Right ventricle myocardium inferior (tissue), 1 donor: ENCODE measurements at regions of chr5 and their contacts with region 1.

Region 1: DNA sequence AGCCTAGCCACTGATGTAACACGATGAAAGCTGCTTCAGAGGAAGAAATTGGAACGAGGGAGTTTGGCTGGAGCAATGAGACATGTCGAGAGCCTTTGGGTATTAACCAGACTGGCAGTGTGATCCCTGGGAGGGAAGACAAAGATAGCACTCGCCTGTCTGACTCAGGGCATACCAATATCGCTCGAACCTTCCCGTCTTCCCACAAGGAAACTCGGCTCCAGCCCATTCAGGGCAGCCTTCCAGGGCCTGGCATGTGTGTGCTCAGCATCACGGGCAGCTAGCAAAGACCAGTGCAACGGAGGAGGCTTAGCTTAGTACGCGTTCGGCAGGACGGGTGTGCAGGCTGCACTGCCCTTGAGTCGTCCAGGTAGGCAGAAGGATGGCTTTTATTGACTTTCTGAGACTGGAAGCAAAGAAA is 356.9 kb upstream of the WWC1 start:
- DNase-seq: peak; percentile 79
- ATAC-seq: peak; percentile 93

Region 2: GRCh38 chr5:167723254-167723871 is 211.2 kb before region 1 on chr5:
- intact Hi-C with region 1: loop called (anchors 2 kb)
- DNase-seq: peak; percentile 80
- ATAC-seq: peak; percentile 82

Region 3: GRCh38 chr5:167861129-167861927 is 73.2 kb before region 1 on chr5:
- intact Hi-C with region 1: no loop called
- DNase-seq: no peak
- ATAC-seq: no peak

Region 4: GRCh38 chr5:167893271-167893670 is 41.3 kb before region 1 on chr5:
- intact Hi-C with region 1: loop called (anchors 5 kb)
- DNase-seq: no peak
- ATAC-seq: no peak